ENCODE measurements at regions of chr17 and their contacts with region 1.

Region 1: DNA sequence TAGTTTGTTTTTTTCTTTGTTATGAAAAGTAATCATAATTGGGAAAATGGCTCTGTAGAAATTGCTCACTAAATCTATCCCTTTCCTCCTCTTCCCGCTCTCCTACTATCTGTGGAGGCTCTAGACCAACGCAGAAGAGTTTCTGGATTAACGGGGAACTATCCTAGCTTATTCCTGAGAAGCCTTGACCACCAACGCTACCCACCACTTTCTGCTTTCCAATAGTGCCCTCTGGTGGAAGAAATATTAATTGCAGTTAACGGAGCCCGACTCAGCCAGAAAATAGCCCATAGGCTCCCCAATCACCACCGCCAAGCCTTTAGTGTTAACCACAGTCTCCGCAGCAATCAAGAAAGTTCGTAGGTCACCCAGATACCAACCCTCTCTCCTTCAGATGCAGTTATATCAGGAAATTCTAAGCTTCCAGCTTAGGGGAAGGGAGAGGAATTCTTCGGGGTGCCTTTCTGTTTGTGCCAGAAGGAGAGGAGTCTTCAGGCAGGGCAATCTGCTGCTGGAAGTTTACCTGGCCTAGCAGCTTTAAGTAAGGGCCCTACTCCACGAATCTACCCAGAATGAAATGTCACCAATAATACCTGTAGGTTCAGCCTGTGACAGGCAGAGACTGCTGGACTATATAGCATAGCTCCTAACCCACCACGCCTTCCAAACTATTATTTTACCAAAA is 23.0 kb upstream of the NSRP1 start:
- DNase-seq: peak; percentile 72
- H3K4me3 ChIP-seq: no peak overlapping the region
- H3K27ac ChIP-seq: no peak overlapping the region
- H3K4me1 ChIP-seq: no peaks in the 10 kb centered on the region
- H3K27me3 ChIP-seq: no peaks in the 10 kb centered on the region
- CTCF ChIP-seq: peak; percentile 52 to 80
- POLR2A ChIP-seq: no peak

Region 2: DNA sequence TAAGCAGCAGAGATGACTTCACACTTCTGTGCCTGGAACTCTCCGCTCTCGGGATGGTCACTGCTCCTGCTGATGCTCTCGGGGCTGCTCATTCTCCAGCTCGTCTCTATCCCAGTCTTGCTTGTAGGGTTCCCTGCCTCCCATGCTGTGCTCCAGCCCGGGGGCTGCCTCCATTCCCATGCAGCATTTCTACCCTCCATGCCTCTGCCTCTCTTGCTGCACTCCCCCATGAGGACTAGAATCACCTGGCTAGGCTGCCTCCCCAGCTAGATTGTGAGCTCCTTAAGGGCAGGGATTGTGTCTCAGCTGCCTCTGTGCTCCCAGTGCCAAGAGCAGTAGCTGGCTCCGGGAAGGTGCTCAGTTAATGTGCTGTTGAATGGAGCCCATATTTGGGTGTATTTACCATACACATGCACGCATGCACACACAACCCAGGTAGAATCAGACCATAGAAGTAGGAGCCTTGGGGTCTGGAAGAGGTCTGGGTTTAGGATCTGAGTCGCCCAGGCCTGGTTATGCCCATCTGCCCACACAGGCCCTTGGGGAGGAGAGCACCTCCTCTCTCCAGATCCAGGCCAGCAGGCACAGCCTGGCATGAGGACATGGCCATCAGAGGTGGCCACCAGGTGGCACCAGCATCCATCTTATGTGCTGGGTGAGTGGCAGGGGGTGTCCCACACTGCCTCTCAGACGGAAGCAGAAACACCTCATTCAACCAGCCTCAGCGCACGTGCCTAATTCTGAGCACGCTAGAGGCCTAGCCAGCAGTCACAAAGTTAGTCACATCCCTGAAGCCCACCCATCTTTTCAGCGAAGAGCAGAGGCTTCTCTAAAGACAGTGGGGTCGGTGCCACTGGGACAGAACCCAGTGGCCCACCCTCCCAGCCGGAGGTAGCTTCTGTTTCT is 513.5 kb before region 1 on chr17:
- CTCF ChIA-PET with region 1: interaction called, 15 read pairs
- POLR2A ChIA-PET with region 1: no interaction called
- dilution Hi-C with region 1: no loop called
- intact Hi-C with region 1: loop called (anchors 1 kb)
- DNase-seq: peak; percentile 81
- H3K4me3 ChIP-seq: no peak overlapping the region
- H3K27ac ChIP-seq: no peak overlapping the region
- H3K4me1 ChIP-seq: peaks cover 14% of the 10 kb centered on the region
- H3K27me3 ChIP-seq: no peaks in the 10 kb centered on the region
- CTCF ChIP-seq: peak; percentile 86 to 92
- POLR2A ChIP-seq: peak; percentile 47

Region 3: DNA sequence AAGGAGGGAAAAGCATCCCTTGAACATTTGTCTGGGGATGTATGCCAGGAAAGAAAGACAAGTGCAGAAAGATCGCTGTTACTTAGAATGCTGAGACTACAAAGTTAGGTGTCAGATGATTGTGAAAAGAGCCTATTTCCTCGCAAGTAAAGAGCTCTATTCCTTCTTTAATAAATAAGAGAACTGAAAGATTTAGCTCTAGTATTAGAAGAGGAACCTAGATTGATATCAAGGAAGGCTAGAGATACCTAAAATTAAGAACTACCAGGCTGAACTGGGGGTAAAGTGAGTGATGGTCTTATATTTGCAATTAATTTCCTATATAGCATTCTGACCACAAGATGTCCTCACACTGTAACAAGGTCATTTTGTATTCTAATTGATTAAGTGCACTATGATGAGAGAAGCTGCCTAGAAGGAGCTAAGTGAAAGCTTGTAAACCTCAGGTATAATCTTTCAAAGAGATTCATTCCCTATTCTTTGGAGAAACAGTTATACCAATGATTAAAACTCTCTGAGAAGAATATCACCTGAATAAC is 225.9 kb before region 1 on chr17:
- CTCF ChIA-PET with region 1: interaction called, 25 read pairs
- POLR2A ChIA-PET with region 1: no interaction called
- dilution Hi-C with region 1: no loop called
- intact Hi-C with region 1: no loop called
- DNase-seq: peak; percentile 40
- H3K4me3 ChIP-seq: no peak overlapping the region
- H3K27ac ChIP-seq: no peak overlapping the region
- H3K4me1 ChIP-seq: no peaks in the 10 kb centered on the region
- H3K27me3 ChIP-seq: no peaks in the 10 kb centered on the region
- CTCF ChIP-seq: no peak
- POLR2A ChIP-seq: no peak

Region 4: DNA sequence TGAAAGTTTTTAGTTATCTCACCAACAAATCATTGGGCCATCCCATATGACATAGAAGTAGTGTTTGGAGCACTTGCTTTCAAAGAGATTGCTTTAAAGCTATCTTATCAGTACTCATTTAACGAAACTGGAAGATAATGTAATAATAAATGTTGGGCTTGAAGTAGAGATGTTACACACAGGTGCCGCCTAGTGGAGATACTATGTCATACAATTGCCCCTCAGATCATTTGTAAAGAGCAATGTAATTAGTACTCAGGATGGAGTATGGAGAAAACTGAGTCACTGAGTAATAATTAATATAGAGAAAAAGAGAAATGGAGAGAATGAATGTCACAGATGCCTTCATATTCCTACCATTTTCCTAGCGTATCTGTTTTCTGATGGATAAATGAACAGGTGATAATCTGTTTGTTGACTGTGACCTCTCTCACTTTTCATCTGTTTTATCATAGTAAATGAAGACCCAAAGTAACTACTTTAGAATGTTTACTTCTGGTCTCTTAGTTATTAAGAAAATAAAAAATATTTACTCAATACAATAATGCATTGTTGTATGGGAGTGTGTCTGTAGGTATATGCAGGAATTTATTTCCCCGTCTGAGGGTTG is 71.8 kb before region 1 on chr17:
- CTCF ChIA-PET with region 1: interaction called, 206 read pairs
- POLR2A ChIA-PET with region 1: no interaction called
- dilution Hi-C with region 1: no loop called
- intact Hi-C with region 1: loop called (anchors 1 kb)
- DNase-seq: peak; percentile 71
- H3K4me3 ChIP-seq: no peak overlapping the region
- H3K27ac ChIP-seq: no peak overlapping the region
- H3K4me1 ChIP-seq: peaks cover 2% of the 10 kb centered on the region
- H3K27me3 ChIP-seq: no peaks in the 10 kb centered on the region
- CTCF ChIP-seq: peak; percentile 58 to 59
- POLR2A ChIP-seq: no peak

Region 5: GRCh38 chr17:30041551-30041950 is 52.1 kb before region 1 on chr17:
- CTCF ChIA-PET with region 1: interaction called, 17 read pairs
- POLR2A ChIA-PET with region 1: no interaction called
- dilution Hi-C with region 1: no loop called
- intact Hi-C with region 1: no loop called
- DNase-seq: no peak
- H3K4me3 ChIP-seq: no peak overlapping the region
- H3K27ac ChIP-seq: no peak overlapping the region
- H3K4me1 ChIP-seq: no peaks in the 10 kb centered on the region
- H3K27me3 ChIP-seq: peaks cover 1 to 6% of the 10 kb centered on the region in 2 experiments
- CTCF ChIP-seq: no peak
- POLR2A ChIP-seq: no peak

Region 6: GRCh38 chr17:30074730-30075129 is 18.9 kb before region 1 on chr17:
- CTCF ChIA-PET with region 1: interaction called, 14 read pairs
- POLR2A ChIA-PET with region 1: no interaction called
- dilution Hi-C with region 1: no loop called
- intact Hi-C with region 1: no loop called
- DNase-seq: no peak
- H3K4me3 ChIP-seq: no peak overlapping the region
- H3K27ac ChIP-seq: no peak overlapping the region
- H3K4me1 ChIP-seq: no peaks in the 10 kb centered on the region
- H3K27me3 ChIP-seq: peaks cover 3 to 34% of the 10 kb centered on the region in 2 experiments
- CTCF ChIP-seq: no peak
- POLR2A ChIP-seq: no peak

Measured in endothelial cell of umbilical vein (primary cell).